Activated T-helper 1 cell treated with anti-CD3 and anti-CD28 coated beads, Interleukin-12 subunit alpha, Interleukin-12 subunit beta, Interleukin-2, Interleukin-4 antibody, amounts not matched to agents 30 ng/mL and 10 ng/mL and 1 ng/mL, durations not matched to agents 14 hours and 24 hours and 36 hours (primary cell): ENCODE measurements at regions of chrX and their contacts with region 1.

Region 1: GRCh38 chrX:49043220-49043986 is at the start of gene TFE3:
- DNase-seq: peak; percentile 94
- H3K4me3 Mint-ChIP-seq: peak within 1 kb of the TSS; percentile 96
- H3K27ac Mint-ChIP-seq: peak within 1 kb of the TSS; percentile 95
- H3K4me1 Mint-ChIP-seq: peaks cover 39% of the 10 kb centered on the region
- H3K27me3 Mint-ChIP-seq: no peaks in the 10 kb centered on the region
- total RNA-seq, gene TFE3: 34.4 and 37.0 TPM in 2 replicates

Region 2: GRCh38 chrX:48891402-48892288 is 151.8 kb before region 1 on chrX:
- intact Hi-C with region 1: loop called (anchors 1 kb)
- DNase-seq: peak; percentile 72
- H3K4me3 Mint-ChIP-seq: peak overlapping the region; percentile 70
- H3K27ac Mint-ChIP-seq: peak overlapping the region; percentile 52
- H3K4me1 Mint-ChIP-seq: peaks cover 15% of the 10 kb centered on the region
- H3K27me3 Mint-ChIP-seq: no peaks in the 10 kb centered on the region

Region 3: DNA sequence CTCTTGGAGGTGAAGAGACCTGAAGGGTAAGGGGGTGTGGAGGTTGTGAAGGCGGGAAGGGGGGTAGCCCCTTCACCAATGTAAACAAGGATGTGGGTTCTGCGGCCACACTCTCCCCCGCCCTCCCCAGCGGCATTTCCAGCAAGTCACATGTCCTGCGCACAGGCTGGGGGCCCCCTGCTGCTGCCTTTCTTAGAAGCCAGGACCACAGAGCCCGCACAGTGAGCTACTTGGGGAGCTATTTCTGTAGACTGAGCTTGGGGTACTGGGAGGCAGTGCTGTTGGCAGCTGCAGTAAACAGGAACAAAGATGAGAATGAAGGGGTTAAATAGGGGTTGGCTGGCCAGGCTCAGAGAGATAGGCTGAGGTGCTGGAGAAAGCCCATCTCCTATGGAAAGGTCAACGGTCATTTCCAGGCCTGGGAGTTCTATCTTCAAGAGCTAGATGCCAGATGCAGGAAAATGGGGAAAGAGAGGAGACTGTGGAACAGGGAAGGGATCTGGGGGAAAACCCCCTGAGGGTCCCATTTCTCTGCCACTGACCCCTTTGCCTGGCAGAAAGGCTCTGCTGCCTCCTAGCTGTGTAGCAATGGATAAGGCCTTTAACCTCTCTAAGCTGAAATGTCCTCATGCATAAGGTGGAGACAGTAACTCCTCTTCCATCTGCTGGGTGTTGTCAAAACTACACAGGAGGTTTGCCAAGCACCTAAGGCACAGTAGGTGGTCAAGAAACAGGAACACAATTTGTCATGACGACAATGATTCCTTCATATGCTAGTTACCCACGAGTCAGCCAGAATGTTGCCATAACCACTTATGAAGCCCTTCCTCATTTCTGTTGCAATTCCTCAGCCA is 106.1 kb before region 1 on chrX:
- intact Hi-C with region 1: loop called (anchors 1 kb)
- DNase-seq: peak; percentile 85
- H3K4me3 Mint-ChIP-seq: peak overlapping the region; percentile 87
- H3K27ac Mint-ChIP-seq: peak overlapping the region; percentile 97
- H3K4me1 Mint-ChIP-seq: peaks cover 80% of the 10 kb centered on the region
- H3K27me3 Mint-ChIP-seq: no peaks in the 10 kb centered on the region

Region 4: GRCh38 chrX:49053223-49054072 is 10.0 kb after region 1 on chrX:
- intact Hi-C with region 1: loop called (anchors 1 kb)
- DNase-seq: peak; percentile 50
- H3K4me3 Mint-ChIP-seq: peak overlapping the region; percentile 85
- H3K27ac Mint-ChIP-seq: peak overlapping the region; percentile 89
- H3K4me1 Mint-ChIP-seq: peaks cover 29% of the 10 kb centered on the region
- H3K27me3 Mint-ChIP-seq: no peaks in the 10 kb centered on the region

Region 5: DNA sequence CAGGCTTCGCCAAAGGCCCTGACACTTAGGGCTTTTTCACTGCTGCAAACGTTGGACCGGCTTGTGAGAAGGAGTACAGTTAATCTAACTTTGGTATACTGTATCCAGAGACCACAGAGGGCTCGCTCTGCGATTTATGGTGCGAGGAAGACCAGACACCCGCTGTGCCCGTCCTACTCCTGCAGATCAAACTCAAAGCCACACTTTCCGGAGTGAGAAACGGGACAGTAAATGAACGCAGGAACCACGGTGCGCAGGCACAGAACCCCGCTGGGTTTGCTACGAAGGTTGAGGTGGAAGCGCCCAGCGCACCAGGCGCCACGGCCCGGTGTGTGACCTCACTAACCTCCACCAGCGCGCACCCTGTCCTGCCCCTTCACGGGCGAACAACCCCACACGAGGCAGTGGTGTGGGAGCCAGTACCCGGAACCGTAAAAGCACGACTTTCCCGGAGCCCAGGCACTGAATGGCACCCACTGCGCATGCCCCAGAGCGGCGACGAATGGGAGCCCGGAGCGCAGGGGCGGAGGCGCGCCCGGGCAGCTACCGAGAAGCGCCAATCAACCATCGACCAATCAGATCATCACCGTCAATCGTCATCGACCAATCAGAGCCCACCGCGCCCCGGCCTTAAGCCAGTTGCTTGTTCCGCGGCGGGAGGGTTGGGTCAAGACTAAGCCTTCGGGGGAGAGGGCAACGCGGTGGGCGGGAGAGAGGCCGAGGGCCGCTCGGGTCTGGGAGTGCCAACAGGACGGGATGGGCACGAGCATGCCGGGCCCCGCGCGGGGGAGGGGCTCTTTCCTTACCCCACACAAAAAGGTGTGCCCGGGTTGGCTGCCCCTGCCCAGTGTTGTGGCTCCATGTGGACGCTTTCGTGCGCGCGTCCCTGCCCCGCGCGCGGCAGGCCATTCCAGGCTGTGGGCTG is 57.6 kb after region 1 on chrX:
- intact Hi-C with region 1: loop called (anchors 1 kb)
- DNase-seq: peak; percentile 86
- H3K4me3 Mint-ChIP-seq: peak overlapping the region; percentile 90
- H3K27ac Mint-ChIP-seq: peak overlapping the region; percentile 87
- H3K4me1 Mint-ChIP-seq: no peaks in the 10 kb centered on the region
- H3K27me3 Mint-ChIP-seq: no peaks in the 10 kb centered on the region